A673 (cell line): ENCODE measurements at regions of chr4 and their contacts with region 1.

Region 1: GRCh38 chr4:140153718-140154571 is at the start of gene MAML3:
- DNase-seq: peak; percentile 98
- H3K4me3 ChIP-seq: peak within 1 kb of the TSS; percentile 64
- H3K27ac ChIP-seq: peak within 1 kb of the TSS; percentile 66
- H3K4me1 ChIP-seq: peaks cover 6% of the 10 kb centered on the region
- H3K27me3 ChIP-seq: no peaks in the 10 kb centered on the region
- CTCF ChIP-seq: no peak
- total RNA-seq, gene MAML3: 3.7 and 4.3 TPM in 2 replicates

Region 2: GRCh38 chr4:140012688-140013486 is 141.1 kb before region 1 on chr4:
- CTCF ChIA-PET with region 1: no interaction called
- POLR2A ChIA-PET with region 1: no interaction called
- intact Hi-C with region 1: loop called (anchors 5 kb)
- DNase-seq: peak; percentile 70
- H3K4me3 ChIP-seq: no peak overlapping the region
- H3K27ac ChIP-seq: no peak overlapping the region
- H3K4me1 ChIP-seq: no peaks in the 10 kb centered on the region
- H3K27me3 ChIP-seq: no peaks in the 10 kb centered on the region
- CTCF ChIP-seq: peak; percentile 77

Region 3: DNA sequence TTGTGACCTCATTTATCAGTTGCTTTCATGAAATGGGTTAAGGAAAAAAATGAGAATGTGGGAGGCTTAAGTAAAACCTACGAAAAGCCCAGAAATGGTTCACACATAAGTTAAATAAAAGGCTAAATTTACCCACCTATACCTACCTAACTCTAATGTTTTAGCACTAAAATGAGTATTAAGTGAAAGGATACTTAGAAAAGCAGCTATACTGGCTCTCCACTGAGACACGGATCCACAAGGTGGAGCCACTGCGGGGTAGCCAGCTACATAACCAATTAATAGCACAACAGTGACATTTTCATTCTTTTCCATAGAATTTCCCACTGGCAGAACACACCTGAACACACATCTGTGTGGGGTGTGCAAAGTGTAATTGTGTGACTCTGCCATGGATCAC is 101.9 kb before region 1 on chr4:
- CTCF ChIA-PET with region 1: interaction called, 4 read pairs
- POLR2A ChIA-PET with region 1: no interaction called
- intact Hi-C with region 1: loop called (anchors 1 kb)
- DNase-seq: peak; percentile 47
- H3K4me3 ChIP-seq: no peak overlapping the region
- H3K27ac ChIP-seq: no peak overlapping the region
- H3K4me1 ChIP-seq: peaks cover 11% of the 10 kb centered on the region
- H3K27me3 ChIP-seq: no peaks in the 10 kb centered on the region
- CTCF ChIP-seq: peak; percentile 77

Region 4: DNA sequence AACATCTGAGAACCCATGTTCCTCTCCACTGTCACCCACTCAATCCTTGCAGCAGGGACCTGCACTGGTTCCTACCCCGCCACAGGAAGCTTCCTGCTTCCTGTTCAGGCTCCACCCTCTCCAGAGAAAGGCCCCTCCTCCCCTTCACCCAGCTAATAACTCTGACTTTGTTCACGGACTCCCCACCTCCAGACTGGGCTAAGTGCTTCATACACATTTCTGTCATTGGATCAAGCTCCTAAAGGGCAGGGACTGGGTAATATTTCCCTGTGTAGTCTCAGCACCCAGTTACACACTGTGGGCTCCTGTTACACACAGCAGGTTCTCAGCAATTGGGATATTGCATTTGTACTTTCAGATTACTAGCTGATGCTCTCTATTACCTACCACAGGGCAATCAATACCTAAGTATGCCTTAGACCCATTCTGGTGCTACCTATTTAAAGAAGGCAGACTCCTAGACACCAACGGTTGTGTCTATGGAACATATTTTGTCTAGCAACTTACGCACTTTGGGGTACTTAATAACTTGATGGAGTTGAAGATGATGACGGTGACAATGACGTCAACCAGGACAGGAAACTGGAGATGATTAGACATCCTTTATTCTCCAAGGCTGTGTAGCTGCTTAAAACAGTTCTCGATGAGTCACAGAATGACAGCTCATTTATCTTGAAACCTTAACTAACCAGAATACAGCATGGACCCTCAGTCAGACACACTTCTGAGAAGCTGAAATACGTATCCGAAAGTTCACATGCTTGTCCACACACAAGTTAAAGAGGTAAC is 58.1 kb before region 1 on chr4:
- CTCF ChIA-PET with region 1: no interaction called
- POLR2A ChIA-PET with region 1: no interaction called
- intact Hi-C with region 1: loop called (anchors 5 kb)
- DNase-seq: peak; percentile 93
- H3K4me3 ChIP-seq: peak overlapping the region; percentile 13
- H3K27ac ChIP-seq: peak overlapping the region; percentile 85
- H3K4me1 ChIP-seq: peaks cover 76% of the 10 kb centered on the region
- H3K27me3 ChIP-seq: no peaks in the 10 kb centered on the region
- CTCF ChIP-seq: no peak

Region 5: GRCh38 chr4:140252742-140253555 is 99.0 kb after region 1 on chr4:
- CTCF ChIA-PET with region 1: interaction called, 3 read pairs
- POLR2A ChIA-PET with region 1: no interaction called
- intact Hi-C with region 1: loop called (anchors 1 kb)
- DNase-seq: peak; percentile 76
- H3K4me3 ChIP-seq: peak overlapping the region; percentile 60
- H3K27ac ChIP-seq: peak overlapping the region; percentile 81
- H3K4me1 ChIP-seq: peaks cover 13% of the 10 kb centered on the region
- H3K27me3 ChIP-seq: no peaks in the 10 kb centered on the region
- CTCF ChIP-seq: peak; percentile 88